Activated T-helper 2 cell treated with anti-CD3 and anti-CD28 coated beads, Interferon-gamma antibody, Interleukin-2, Interleukin-4, amounts not matched to agents 10 μg/mL and 5 μg/mL and 100 μg/mL, durations not matched to agents 14 hours and 24 hours and 36 hours (primary cell): ENCODE measurements at regions of chr2 and their contacts with region 1.

Region 1: GRCh38 chr2:113889471-113890252 is at the start of gene ACTR3:
- DNase-seq: peak; percentile 98
- H3K4me3 Mint-ChIP-seq: peak within 1 kb of the TSS; percentile 98
- H3K27ac Mint-ChIP-seq: peak within 1 kb of the TSS; percentile 99
- H3K4me1 Mint-ChIP-seq: peaks cover 67% of the 10 kb centered on the region
- H3K27me3 Mint-ChIP-seq: no peaks in the 10 kb centered on the region
- total RNA-seq, gene ACTR3: 521 and 530 TPM in 2 replicates

Region 2: DNA sequence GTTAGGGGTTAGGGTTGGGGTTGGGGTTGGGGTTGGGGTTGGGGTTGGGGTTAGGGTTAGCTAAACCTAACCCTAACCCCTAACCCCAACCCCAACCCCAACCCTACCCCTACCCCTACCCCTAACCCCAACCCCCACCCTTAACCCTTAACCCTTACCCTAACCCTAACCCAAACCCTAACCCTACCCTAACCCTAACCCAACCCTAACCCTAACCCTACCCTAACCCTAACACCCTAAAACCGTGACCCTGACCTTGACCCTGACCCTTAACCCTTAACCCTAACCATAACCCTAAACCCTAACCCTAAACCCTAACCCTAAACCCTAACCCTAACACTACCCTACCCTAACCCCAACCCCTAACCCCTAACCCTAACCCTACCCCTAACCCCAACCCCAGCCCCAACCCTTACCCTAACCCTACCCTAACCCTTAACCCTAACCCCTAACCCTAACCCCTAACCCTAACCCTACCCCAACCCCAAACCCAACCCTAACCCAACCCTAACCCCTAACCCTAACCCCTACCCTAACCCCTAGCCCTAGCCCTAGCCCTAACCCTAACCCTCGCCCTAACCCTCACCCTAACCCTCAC is 286.7 kb before region 1 on chr2:
- intact Hi-C with region 1: loop called (anchors 10 kb)
- DNase-seq: no peak
- H3K4me3 Mint-ChIP-seq: peak overlapping the region; percentile 85
- H3K27ac Mint-ChIP-seq: peak overlapping the region; percentile 93
- H3K4me1 Mint-ChIP-seq: peaks cover 6% of the 10 kb centered on the region
- H3K27me3 Mint-ChIP-seq: no peaks in the 10 kb centered on the region

Region 3: GRCh38 chr2:113756355-113757137 is 133.1 kb before region 1 on chr2 and contains the start of gene SLC35F5:
- intact Hi-C with region 1: loop called (anchors 1 kb)
- DNase-seq: peak; percentile 92
- H3K4me3 Mint-ChIP-seq: peak within 1 kb of the TSS; percentile 91
- H3K27ac Mint-ChIP-seq: peak within 1 kb of the TSS; percentile 99
- H3K4me1 Mint-ChIP-seq: peaks cover 29% of the 10 kb centered on the region
- H3K27me3 Mint-ChIP-seq: peaks cover 3% of the 10 kb centered on the region
- total RNA-seq, gene SLC35F5: 39.6 and 41.8 TPM in 2 replicates

Region 4: GRCh38 chr2:113876503-113877387 is 12.9 kb before region 1 on chr2:
- intact Hi-C with region 1: loop called (anchors 1 kb)
- DNase-seq: peak; percentile 71
- H3K4me3 Mint-ChIP-seq: peak overlapping the region; percentile 30
- H3K27ac Mint-ChIP-seq: peak overlapping the region; percentile 85
- H3K4me1 Mint-ChIP-seq: peaks cover 42% of the 10 kb centered on the region
- H3K27me3 Mint-ChIP-seq: no peaks in the 10 kb centered on the region

Region 5: DNA sequence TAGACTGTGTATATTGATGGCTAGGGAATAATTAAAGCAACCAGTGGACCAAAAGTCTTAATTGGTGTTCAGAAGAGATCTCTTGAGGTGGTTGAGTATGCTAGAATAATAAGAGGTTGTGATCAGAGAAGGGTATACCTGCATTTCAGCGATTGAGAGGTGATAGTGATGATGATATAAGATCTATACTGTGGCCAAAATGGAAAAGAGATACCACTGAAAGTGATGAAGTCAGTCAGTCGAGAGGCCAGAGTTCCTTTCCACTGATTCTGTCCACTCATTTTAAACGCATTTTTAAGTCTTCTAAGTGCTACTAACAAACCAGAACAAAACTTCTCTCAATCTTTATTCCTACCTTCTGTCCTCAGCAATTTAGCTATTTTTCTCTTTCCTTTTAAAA is 33.1 kb after region 1 on chr2:
- intact Hi-C with region 1: loop called (anchors 2 kb)
- DNase-seq: no peak
- H3K4me3 Mint-ChIP-seq: no peak overlapping the region
- H3K27ac Mint-ChIP-seq: no peak overlapping the region
- H3K4me1 Mint-ChIP-seq: peaks cover 14% of the 10 kb centered on the region
- H3K27me3 Mint-ChIP-seq: no peaks in the 10 kb centered on the region

Region 6: DNA sequence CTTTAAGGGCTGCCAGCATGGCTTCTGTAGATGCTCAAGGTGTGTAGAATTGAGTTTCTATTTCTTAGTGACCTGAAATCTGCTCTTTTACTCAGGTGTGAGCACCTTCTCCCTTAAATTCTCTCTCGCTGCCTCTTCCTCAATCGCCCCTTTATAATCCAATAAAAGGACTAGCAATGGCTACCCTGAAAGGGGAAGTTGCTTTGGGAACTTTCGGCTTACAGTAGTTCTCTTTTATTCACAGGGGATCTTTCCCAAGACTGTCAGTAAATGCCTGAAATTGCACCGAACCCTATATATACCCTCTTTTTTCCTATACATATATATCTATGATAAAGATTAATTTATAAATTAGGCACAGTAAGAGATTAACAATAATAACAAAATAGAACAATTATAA is 122.1 kb after region 1 on chr2:
- intact Hi-C with region 1: no loop called
- DNase-seq: no peak
- H3K4me3 Mint-ChIP-seq: no peak overlapping the region
- H3K27ac Mint-ChIP-seq: no peak overlapping the region
- H3K4me1 Mint-ChIP-seq: no peaks in the 10 kb centered on the region
- H3K27me3 Mint-ChIP-seq: no peaks in the 10 kb centered on the region